Heart left ventricle (tissue), 16 donors: ENCODE measurements at regions of chr10 and their contacts with region 1.

Region 1: GRCh38 chr10:13542533-13542932 is 13.7 kb upstream of the BEND7 start:
- DNase-seq: no peak
- ATAC-seq: no peak
- H3K4me3 ChIP-seq: no peak overlapping the region
- H3K27ac ChIP-seq: no peak overlapping the region
- H3K4me1 ChIP-seq: no peaks in the 10 kb centered on the region
- H3K27me3 ChIP-seq: peaks cover 0 to 55% (median 6%) of the 10 kb centered on the region in 9 donors
- CTCF ChIP-seq: no peak
- POLR2A ChIP-seq: no peak

Region 2: DNA sequence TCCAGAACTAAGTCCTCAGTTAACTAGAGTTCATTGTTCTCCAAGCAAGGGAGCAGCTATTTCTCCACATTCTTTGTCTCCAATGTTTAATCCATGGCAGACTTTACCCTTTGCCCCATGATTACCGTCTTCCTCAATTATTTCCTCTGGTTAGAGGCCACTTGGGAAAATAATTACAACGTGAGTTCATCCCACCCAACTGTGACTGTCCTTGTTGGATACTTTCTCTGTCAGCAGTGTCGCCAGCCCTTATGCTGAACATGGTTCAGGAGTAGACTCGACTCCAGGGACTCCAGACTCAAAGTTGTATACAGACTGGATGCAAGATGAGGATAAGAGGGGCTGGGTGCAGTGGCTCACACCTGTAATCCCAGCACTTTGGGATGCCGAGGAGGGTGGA is 177.3 kb before region 1 on chr10:
- intact Hi-C with region 1: loop called in 5 of 10 experiments (anchors 5 to 10 kb)
- DNase-seq: no peak
- ATAC-seq: no peak
- H3K4me3 ChIP-seq: no peak overlapping the region
- H3K27ac ChIP-seq: no peak overlapping the region
- H3K4me1 ChIP-seq: no peaks in the 10 kb centered on the region
- H3K27me3 ChIP-seq: no peaks in the 10 kb centered on the region
- CTCF ChIP-seq: no peak
- POLR2A ChIP-seq: no peak

Region 3: DNA sequence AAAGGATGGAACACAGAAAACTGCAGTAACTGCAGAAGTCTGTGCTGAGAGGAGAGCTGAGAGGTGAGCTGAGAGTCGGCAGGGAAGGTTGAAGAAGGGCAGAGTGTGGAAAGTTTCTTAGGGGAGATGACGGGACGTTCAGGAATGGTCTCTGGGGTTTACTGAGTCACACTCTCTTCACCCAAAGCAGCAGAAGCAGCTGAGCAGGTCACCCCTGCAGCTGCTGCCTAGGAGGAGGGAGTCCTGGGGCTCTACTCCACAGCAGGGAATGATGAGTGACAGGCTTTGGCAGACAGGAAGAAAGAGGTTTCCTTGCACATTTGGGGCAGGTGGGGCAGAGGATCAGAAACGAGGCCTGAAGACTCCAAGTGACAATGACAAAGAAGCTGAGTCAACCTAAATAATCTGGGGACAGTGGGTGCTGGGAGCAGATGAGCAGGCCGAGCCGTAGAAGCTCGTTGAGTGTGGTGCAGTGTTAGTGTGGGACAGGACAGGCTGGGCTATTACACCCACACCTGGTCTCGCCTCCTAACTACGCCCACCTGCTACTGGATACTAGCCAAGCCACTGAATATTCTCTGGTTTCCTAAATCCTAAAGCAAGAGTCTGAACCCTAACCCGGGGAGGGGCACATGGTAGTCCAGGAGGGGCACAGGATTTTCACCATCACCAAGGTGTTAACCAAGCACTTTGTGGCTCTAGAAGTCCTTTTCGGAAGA is 38.6 kb before region 1 on chr10:
- intact Hi-C with region 1: no loop called
- DNase-seq: no peak
- ATAC-seq: no peak
- H3K4me3 ChIP-seq: no peak overlapping the region
- H3K27ac ChIP-seq: no peak overlapping the region
- H3K4me1 ChIP-seq: peaks cover 0 to 11% (median 0%) of the 10 kb centered on the region in 12 donors
- H3K27me3 ChIP-seq: no peaks in the 10 kb centered on the region
- CTCF ChIP-seq: no peak
- POLR2A ChIP-seq: no peak